A673 (cell line): ENCODE measurements at regions of chr1 and their contacts with region 1.

Region 1: DNA sequence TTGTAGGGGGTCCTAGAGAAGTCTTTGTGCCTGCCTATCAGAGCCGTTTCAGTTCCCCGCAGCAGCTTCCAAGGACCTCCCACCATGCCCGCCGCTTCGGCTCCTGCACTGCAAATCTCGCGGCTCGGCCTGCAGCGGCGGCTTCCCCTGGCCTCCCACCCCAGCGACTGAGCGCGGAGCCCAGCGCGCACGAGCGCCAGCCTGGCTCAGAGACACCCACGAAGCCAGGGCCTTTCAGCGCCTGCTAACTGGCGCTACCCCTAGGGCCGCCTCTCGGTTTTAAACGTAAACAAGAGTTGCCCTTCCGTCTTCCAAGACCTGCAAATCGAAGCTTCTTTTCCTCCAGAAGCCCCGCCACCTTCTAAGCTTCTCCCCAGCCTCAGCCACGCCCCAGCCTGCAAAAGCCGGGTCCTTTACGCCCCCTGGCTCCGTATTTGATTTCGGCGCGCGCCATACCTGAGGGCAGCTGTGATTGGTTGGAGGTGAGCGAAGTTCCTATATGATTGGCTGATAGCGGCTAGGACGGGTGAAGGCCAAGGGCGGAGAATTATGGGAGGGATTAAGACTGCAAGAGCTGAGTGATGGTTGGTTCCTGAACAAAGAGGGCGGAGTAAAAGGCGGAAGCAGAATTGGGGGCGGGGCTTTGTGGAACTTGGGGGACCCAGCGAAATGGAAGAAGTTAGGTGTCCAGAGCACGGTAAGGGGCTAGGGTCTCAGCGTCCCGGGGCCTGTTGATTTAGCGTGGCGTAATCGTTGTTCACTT is at the start of gene TTF2:
- DNase-seq: peak; percentile 100
- H3K4me3 ChIP-seq: peak within 1 kb of the TSS; percentile 84
- H3K27ac ChIP-seq: peak within 1 kb of the TSS; percentile 92
- H3K4me1 ChIP-seq: peaks cover 23% of the 10 kb centered on the region
- H3K27me3 ChIP-seq: no peaks in the 10 kb centered on the region
- CTCF ChIP-seq: no peak
- total RNA-seq, gene TTF2: 89.1 and 91.4 TPM in 2 replicates

Region 2: DNA sequence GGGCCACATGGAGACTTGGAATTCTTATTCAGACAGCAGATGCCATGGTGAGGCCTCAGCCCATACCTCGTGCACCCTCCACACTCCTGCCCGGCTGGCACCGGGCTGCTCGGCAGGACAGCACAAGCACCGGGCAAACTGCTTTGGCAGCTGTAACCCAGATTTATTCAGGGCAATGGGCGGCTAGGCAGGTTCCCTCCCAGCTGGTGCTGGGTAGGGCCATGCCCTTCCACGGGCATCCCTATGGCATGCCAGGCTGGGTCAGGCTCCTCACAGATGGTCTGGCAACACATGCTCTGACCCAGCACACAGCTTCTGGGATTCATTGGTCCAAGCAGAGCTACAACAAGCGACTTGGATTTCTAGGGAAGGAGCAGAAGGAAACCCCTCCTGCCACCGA is 633.5 kb before region 1 on chr1:
- CTCF ChIA-PET with region 1: no interaction called
- POLR2A ChIA-PET with region 1: no interaction called
- intact Hi-C with region 1: no loop called
- DNase-seq: no peak
- H3K4me3 ChIP-seq: no peak overlapping the region
- H3K27ac ChIP-seq: no peak overlapping the region
- H3K4me1 ChIP-seq: no peaks in the 10 kb centered on the region
- H3K27me3 ChIP-seq: no peaks in the 10 kb centered on the region
- CTCF ChIP-seq: no peak

Region 3: DNA sequence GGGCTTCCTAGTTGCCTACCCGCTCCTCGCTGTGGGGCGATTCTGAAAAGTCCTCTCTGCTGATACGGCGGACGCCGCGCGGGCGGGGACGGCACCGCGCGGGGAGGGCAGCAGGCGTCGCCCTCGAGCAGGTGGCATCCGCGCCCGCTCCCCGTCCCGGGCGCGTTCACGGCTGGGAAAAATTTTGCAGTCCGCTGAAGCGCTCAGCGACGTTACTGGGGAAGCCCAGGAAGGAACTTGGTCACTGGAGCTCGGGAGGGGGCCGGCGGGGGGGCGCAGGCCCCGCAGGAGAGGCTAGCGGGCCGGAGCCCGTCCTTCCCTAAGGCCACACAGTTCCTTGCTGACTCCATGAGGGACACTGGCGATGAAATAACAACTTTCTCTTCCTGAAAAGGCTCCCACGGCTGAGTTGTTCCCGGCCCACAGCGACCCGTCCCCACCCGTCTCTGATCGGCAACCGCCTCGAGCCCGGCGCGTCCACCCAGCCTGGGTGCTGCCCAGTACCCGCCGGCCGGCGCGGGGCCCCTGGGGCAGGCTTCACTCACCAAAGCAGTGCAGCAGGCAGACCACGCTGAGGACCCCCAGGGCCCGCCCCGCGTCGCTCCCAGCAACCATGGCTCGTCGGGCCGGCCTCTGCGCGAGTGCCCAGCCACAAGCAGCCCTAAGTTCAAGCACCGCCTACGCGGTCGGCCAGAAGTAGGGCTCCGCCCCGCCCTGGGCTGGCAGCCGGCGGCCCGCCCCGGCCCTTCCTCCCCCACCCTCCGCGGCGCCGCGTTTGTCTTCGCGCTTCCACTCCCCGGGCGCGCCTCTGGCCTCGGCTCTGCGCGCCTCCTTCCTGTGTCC is 489.3 kb before region 1 on chr1 and contains the start of gene CD58:
- CTCF ChIA-PET with region 1: no interaction called
- POLR2A ChIA-PET with region 1: no interaction called
- intact Hi-C with region 1: loop called (anchors 1 kb)
- DNase-seq: peak; percentile 91
- H3K4me3 ChIP-seq: peak within 1 kb of the TSS; percentile 62
- H3K27ac ChIP-seq: peak within 1 kb of the TSS; percentile 67
- H3K4me1 ChIP-seq: peaks cover 3% of the 10 kb centered on the region
- H3K27me3 ChIP-seq: no peaks in the 10 kb centered on the region
- CTCF ChIP-seq: peak; percentile 69
- total RNA-seq, gene CD58: 8.2 and 9.1 TPM in 2 replicates

Region 4: DNA sequence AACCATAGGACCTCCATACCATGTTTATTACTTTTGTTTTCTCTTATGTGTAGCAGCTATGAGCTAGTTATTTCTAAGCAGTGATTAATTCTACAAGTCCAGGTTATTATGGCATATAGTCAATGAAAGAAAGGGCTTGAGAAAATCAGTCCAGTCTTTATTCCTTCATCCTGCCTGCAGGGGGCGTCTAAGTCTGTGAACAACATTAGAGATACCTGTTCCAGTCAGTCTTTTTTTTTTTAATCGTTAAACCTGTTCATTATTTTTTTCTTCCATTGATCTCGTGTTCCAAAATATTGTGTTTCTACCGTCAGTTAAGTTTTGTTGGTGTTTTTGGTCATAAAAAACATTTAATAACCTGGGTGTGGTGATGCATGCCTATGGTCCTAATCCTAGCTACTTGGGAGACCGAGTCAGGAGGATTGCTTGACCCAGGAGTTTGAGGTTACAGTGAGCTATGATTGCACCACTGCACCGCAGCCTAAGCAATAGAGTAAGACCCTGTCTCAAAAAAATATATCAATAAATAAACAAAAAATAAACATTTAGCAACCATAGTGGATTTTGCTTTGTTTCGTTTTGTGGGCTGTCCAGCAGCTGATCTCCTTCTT is 335.0 kb before region 1 on chr1:
- CTCF ChIA-PET with region 1: interaction called, 3 read pairs
- POLR2A ChIA-PET with region 1: no interaction called
- intact Hi-C with region 1: loop called (anchors 5 kb)
- DNase-seq: peak; percentile 78
- H3K4me3 ChIP-seq: no peak overlapping the region
- H3K27ac ChIP-seq: no peak overlapping the region
- H3K4me1 ChIP-seq: peaks cover 18% of the 10 kb centered on the region
- H3K27me3 ChIP-seq: peaks cover 5% of the 10 kb centered on the region
- CTCF ChIP-seq: peak; percentile 94

Region 5: DNA sequence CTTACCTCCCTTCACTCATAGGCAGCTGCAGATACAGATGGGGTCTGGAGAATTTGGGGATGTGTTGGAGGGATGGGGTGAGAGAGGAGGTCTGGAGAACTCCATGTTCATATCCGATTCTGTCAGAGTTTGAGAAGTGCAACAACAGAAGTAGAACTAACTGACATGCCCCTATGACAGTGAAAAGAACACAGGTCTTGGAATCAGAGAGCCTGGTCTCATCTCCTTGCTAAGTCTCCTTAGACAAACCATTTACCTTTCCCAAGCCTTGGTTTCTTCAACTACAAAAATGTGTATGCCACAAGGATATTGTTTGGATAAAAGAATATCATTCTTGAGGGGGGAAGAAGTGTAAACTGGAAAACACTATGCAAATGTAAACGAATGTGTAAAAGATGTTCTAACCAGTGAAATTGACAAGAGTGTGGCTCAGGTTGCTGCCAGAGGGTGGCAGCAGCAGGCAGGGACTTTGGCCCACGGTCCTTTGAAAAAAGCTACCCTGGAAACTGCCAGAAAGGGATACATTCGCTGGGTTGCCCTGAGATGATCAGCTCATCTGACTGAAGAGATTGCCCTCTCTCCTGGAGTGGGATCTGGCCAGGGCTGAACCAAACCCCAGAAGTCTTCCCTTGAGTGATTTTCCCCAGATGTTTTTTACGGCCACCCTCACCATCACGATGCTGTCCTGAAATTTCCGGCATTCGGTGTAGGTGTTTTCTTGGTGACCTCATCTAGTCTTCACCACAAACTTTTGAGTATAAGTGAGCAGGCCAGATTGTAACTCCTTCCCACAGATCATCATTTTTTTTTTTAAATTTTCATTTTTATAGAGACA is 322.6 kb before region 1 on chr1:
- CTCF ChIA-PET with region 1: interaction called, 9 read pairs
- POLR2A ChIA-PET with region 1: no interaction called
- intact Hi-C with region 1: loop called (anchors 1 kb)
- DNase-seq: peak; percentile 62
- H3K4me3 ChIP-seq: no peak overlapping the region
- H3K27ac ChIP-seq: no peak overlapping the region
- H3K4me1 ChIP-seq: peaks cover 2% of the 10 kb centered on the region
- H3K27me3 ChIP-seq: no peaks in the 10 kb centered on the region
- CTCF ChIP-seq: peak; percentile 86

Region 6: DNA sequence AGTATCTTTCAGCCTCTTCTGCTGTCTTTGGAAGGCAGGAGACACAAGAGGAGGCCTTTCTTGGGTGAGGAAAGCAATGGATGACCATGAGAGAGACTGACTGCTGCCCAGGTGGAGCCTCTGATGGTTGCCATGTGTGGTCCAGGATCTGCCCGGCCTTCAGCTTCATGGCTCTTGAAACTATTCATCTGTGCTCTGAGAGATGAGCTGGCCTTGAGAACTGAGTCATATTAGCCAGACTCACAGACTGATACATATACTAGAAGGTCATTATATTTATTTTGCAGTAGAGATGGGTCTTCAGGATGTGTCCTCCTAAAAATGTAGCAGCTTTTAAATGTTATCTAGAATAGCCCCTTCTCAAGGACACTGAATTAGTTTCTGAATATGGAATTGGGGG is 116.4 kb before region 1 on chr1:
- CTCF ChIA-PET with region 1: no interaction called
- POLR2A ChIA-PET with region 1: no interaction called
- intact Hi-C with region 1: no loop called
- DNase-seq: no peak
- H3K4me3 ChIP-seq: no peak overlapping the region
- H3K27ac ChIP-seq: no peak overlapping the region
- H3K4me1 ChIP-seq: no peaks in the 10 kb centered on the region
- H3K27me3 ChIP-seq: no peaks in the 10 kb centered on the region
- CTCF ChIP-seq: no peak

Region 7: DNA sequence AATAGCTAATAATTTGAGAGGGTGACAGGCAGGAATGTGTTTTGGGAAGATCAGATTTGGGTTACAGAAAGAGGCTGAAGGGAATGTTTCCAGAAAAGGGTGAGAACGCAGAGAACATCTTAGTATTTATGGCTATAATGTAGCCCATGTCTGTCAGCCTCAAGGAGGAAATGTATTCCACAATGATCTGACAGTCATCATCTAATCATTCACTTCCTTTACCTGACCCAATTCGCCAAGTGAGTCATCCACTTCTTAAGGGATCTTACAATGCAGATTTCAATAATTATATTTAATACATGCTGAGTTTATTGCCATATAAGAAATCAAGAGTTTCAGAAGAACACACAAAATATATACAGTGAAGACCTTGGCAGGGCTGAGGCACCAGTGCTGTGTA is 50.9 kb after region 1 on chr1:
- CTCF ChIA-PET with region 1: no interaction called
- POLR2A ChIA-PET with region 1: no interaction called
- intact Hi-C with region 1: no loop called
- DNase-seq: peak; percentile 11
- H3K4me3 ChIP-seq: no peak overlapping the region
- H3K27ac ChIP-seq: no peak overlapping the region
- H3K4me1 ChIP-seq: no peaks in the 10 kb centered on the region
- H3K27me3 ChIP-seq: no peaks in the 10 kb centered on the region
- CTCF ChIP-seq: no peak

Region 8: DNA sequence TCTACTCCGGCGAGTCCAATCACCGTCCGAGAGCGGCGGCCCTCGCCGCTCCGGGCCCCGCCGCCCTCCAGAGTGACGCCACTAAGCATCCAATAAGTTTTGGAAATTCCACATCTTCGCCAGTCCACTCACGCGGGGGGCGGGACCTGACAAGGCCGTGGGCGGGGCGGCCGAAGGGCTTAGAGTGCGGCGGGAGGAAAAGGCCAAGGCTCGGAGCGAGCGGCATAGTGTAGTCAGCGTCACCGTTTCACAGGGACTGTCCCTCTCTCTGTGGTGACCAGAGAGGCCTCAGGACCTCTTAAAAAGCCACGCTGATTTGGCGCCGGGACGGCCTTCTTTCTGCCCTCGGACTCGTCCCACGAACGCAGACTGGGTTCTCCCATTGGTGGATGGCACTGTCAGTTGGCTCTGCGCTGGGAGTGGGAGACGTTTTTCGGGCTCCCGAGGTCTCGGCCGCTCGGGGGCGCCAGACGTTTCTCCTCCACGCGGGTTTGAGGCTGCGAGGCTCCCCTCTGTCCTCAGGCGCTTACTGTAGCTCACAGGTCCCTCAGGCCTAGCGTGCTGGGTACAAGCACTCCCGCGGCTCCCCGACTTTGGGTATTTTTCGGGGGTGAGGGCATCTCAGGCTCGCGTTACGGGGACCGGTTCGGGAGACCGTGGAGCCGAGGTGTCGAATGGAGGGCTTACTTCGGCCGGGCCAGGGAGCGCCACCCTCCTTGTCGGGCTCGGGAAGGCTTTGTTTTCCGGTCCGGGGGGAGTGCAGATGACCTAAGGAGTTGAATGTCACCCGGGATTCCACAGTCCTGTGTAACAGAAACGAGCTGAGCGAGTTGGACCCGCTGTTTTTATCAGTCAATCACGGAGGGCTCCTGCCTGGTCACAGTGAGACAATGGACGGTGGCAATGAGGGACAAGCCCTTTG is 62.2 kb after region 1 on chr1:
- CTCF ChIA-PET with region 1: interaction called, 13 read pairs
- POLR2A ChIA-PET with region 1: no interaction called
- intact Hi-C with region 1: loop called (anchors 5 kb)
- DNase-seq: peak; percentile 96
- H3K4me3 ChIP-seq: peak overlapping the region; percentile 59
- H3K27ac ChIP-seq: peak overlapping the region; percentile 82
- H3K4me1 ChIP-seq: no peaks in the 10 kb centered on the region
- H3K27me3 ChIP-seq: peaks cover 8% of the 10 kb centered on the region
- CTCF ChIP-seq: peak; percentile 92